WTC11 (cell line): ENCODE measurements at regions of chr1 and their contacts with region 1.

Region 1: GRCh38 chr1:203267347-203267846 is 37.9 kb upstream of the BTG2 start:
- DNase-seq: peak; percentile 86
- ATAC-seq: peak; percentile 58
- H3K4me3 Mint-ChIP-seq: peak overlapping the region; percentile 76
- H3K27ac Mint-ChIP-seq: no peak overlapping the region; the same call in 1 of the 2 replicates
- H3K4me1 Mint-ChIP-seq: peaks cover 11% of the 10 kb centered on the region
- H3K27me3 Mint-ChIP-seq: peaks cover 10% of the 10 kb centered on the region
- CTCF ChIP-seq: peak; percentile 85

Region 2: DNA sequence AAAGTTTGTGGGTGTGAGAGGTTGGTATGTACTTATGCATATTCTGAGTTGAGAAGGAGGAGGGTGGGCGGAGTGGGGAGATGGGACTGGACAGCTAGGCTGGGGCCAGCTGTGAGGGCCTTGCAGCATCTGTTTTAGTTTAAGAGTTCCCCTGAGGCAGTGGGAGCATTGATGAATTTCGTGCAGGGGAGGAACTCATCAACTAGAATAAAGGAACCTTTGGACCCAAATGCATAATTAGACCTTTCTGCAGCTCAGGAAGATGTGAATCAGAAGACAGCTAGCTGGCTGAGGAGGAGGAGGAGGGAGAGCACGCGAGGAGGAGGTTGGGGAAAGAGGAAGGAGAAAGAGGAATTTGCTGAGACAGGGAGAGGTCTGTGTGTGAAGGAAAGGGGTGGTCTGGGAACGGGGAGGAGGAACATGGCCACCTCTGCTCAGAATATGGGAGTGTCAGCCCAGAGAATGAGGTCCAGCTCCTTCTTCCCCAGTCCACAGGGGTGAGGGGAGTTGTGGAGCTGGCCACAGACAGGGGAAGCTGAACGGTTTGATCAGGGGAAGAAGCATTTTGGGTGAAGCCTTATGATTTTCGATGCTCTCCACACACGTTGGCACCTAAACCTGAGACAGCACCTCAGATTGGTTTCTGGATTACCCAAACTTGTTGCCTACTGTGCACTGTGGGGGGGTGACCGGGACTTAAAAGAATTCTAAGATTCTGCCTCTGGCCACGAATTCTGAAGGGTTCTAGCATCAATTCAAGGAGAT is 209.3 kb before region 1 on chr1:
- CTCF ChIA-PET with region 1: interaction called, 61 read pairs
- POLR2A ChIA-PET with region 1: no interaction called
- DNase-seq: no peak
- ATAC-seq: no peak
- H3K4me3 Mint-ChIP-seq: no peak overlapping the region
- H3K27ac Mint-ChIP-seq: no peak overlapping the region
- H3K4me1 Mint-ChIP-seq: peaks cover 34% of the 10 kb centered on the region
- H3K27me3 Mint-ChIP-seq: no peaks in the 10 kb centered on the region
- CTCF ChIP-seq: no peak

Region 3: GRCh38 chr1:203127666-203128430 is 139.5 kb before region 1 on chr1 and contains the start of gene ADORA1:
- CTCF ChIA-PET with region 1: interaction called, 93 read pairs
- POLR2A ChIA-PET with region 1: no interaction called
- DNase-seq: peak; percentile 80
- ATAC-seq: peak; percentile 87
- H3K4me3 Mint-ChIP-seq: peak within 1 kb of the TSS; percentile 67
- H3K27ac Mint-ChIP-seq: no peak within 1 kb of the TSS
- H3K4me1 Mint-ChIP-seq: peaks cover 33% of the 10 kb centered on the region
- H3K27me3 Mint-ChIP-seq: peaks cover 37% of the 10 kb centered on the region
- CTCF ChIP-seq: no peak
- total RNA-seq, gene ADORA1: 1.8 to 2.7 TPM (median 2.6 TPM) in 3 replicates

Region 4: DNA sequence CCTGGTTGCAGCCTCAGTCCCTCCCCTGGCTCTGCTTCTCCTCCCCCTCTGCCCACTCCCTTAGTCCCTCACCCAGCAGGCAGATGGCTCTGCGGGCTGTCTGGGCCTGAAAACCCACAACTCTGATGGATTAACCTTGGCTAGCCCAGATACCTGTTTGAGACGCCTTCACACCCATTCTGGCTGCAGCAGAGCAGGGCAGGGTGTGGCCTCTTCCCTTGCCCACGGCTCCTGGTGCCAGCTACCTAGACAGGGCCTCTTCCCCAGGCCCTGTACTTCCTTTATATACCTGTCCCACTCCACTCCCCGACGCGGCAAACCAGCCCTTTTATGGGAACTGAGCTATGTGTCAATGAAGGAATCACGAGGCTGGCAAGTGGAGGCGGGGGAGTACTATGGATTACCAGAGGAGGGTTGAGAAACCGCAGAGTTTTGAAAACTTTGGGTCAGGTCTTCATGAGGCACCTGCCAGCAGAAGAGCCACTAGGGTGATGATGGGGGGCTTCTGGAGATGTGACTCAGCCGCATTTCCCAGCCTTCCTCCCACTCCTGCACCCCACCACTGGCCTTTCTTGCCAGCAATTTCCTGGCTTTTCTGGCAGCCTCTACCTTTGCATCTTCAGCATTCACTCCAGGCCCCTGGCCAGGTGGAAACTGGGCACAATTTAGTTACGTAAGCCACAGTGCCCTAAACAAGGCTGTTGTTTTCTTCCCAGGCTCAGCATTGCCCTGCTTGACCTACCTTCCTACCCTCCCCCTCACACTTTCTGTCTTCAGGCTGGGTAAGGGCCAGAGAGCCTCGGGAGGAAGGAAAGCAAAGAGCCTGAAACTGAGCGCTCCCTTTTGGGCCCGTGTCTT is 80.7 kb before region 1 on chr1 and contains the start of gene CHI3L1:
- CTCF ChIA-PET with region 1: interaction called, 15 read pairs
- POLR2A ChIA-PET with region 1: no interaction called
- DNase-seq: no peak
- ATAC-seq: peak; percentile 65
- H3K4me3 Mint-ChIP-seq: peak within 1 kb of the TSS; percentile 32; the same call in 1 of the 2 replicates
- H3K27ac Mint-ChIP-seq: no peak within 1 kb of the TSS
- H3K4me1 Mint-ChIP-seq: peaks cover 32% of the 10 kb centered on the region
- H3K27me3 Mint-ChIP-seq: peaks cover 2% of the 10 kb centered on the region; the same call in 1 of the 2 replicates
- CTCF ChIP-seq: no peak
- total RNA-seq, gene CHI3L1: 0.24 to 0.41 TPM (median 0.27 TPM) in 3 replicates

Region 5: GRCh38 chr1:203280996-203281395 is 13.6 kb after region 1 on chr1:
- CTCF ChIA-PET with region 1: interaction called, 78 read pairs
- POLR2A ChIA-PET with region 1: no interaction called
- DNase-seq: no peak
- ATAC-seq: peak; percentile 22
- H3K4me3 Mint-ChIP-seq: no peak overlapping the region
- H3K27ac Mint-ChIP-seq: no peak overlapping the region
- H3K4me1 Mint-ChIP-seq: peaks cover 12% of the 10 kb centered on the region
- H3K27me3 Mint-ChIP-seq: peaks cover 19% of the 10 kb centered on the region
- CTCF ChIP-seq: no peak

Region 6: DNA sequence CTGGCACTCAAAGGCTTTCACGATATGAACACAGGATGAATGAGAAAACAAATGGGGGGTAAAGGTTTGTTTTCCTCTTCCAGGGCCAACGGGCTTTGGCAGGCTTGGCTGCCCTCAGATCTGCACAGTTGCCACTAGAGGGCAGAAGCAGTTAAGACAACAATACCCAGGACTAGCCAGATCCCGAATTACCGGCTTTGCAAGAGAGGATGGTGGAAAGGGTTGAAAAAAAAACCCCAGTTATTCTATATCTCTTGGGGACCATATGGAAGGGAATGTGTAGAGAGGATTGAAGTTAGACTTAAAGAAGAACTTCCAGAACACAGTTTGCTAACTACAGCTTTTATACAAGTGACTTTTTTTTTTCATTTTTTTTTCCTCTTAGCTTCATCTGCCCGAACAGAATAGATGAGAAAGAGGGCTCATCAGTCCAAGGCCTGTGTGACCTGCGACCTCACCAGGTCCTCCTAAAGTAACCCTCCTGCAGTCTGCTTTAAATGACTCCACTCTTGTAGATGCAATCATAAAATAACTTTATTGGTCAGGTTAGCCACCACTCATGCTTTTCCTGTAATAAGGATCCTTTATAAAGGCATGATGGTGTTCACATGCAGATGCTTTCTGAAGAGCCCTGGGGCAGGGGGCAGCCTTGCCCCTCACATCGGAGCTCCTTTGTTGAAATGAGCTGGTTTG is 72.9 kb after region 1 on chr1:
- CTCF ChIA-PET with region 1: interaction called, 121 read pairs
- POLR2A ChIA-PET with region 1: no interaction called
- DNase-seq: peak; percentile 75
- ATAC-seq: peak; percentile 73
- H3K4me3 Mint-ChIP-seq: no peak overlapping the region
- H3K27ac Mint-ChIP-seq: no peak overlapping the region
- H3K4me1 Mint-ChIP-seq: peaks cover 31% of the 10 kb centered on the region
- H3K27me3 Mint-ChIP-seq: 0 out of 2 replicates have a peak, but pooled peaks cover 5% of the 10 kb centered on the region
- CTCF ChIP-seq: peak; percentile 75

Region 7: DNA sequence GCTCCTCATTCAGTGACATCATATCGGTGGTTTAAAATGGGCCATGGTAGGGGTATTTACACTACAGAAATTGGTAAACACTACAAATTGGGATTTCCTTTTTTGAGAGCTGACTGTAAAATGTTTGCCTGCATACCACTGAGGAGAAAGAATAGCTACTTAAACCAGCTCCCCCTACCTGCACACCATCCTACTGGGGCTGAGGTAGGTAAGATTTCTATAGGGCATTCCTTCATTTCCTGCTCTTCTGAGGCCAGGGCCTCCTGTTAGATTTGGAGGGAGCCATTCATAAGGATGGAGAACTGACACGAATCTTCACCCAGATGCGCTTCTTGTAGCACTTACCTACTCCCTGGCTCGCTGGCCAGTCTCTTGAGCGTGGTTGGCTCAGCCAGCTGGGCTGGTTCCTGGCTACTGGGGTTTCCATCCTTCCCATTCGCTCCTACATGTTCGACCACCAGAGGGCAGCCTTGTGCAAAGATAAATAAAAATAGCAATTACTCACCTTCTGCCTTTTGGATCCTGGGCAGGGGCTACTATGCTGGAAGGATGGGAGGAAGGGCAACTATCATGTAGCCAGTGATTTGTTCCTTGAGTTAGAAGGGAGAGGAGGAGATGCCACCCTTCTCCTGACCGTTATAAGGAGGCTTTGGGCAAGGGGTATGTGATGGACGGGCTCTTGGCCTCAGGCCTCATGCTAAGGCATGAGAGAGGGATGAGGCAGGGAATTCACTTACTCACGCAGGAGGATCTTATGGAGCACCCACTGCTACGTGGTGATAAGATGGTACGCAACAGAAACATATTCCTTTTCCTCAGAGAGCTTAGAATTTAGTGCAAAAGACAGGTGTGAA is 237.2 kb after region 1 on chr1:
- CTCF ChIA-PET with region 1: interaction called, 10 read pairs
- POLR2A ChIA-PET with region 1: no interaction called
- DNase-seq: peak; percentile 87
- ATAC-seq: peak; percentile 88
- H3K4me3 Mint-ChIP-seq: no peak overlapping the region
- H3K27ac Mint-ChIP-seq: no peak overlapping the region
- H3K4me1 Mint-ChIP-seq: peaks cover 34% of the 10 kb centered on the region
- H3K27me3 Mint-ChIP-seq: no peaks in the 10 kb centered on the region; the same call in 1 of the 2 replicates
- CTCF ChIP-seq: peak; percentile 72